IMR-90 (cell line): ENCODE measurements at regions of chr9 and their contacts with region 1.

Region 1: DNA sequence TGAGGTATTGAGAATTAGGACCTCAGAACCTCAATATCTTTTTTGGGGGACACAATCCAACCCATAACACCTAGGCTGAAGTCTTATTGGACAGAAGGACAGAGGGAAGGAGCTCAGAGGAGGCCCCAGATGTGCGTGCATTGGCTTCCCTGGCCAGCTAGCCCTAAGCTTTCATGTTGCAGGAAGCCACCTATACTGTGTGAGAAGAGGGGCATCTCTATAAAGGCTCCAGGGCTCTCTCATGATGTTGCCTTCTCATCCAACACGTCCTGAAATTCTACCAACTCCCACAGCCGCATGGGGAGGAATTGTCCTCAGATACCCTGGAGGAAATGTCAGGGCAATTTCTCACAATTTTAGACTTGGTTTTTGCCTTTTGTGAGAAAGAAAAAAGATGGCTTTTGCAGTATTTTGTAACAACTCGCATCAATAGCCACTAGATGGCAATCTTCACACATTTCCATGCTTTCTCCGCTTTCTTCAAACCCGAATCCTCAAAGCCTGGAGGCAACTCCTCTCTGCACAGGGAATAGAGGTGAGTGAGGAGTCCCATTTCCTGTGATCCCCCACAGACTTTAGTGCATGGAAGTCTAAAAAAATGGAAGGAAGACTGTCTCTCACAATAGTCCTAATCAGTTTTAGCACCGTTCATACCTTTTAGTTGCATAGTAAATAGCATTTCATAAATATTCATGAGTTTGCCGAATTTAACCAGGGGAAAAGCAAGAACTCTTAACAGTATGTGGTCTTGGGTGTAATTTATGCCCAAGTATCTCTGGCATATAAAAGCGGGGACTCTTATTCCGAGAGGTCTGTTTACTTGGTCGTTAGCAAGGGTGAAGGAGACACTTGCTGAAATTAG is 7.4 kb upstream of the PPP3R2 start:
- DNase-seq: peak; percentile 51
- ATAC-seq: peak; percentile 82
- H3K4me3 ChIP-seq: no peak overlapping the region
- H3K27ac ChIP-seq: no peak overlapping the region
- H3K4me1 ChIP-seq: no peaks in the 10 kb centered on the region
- H3K27me3 ChIP-seq: peaks cover 1% of the 10 kb centered on the region; the same call in 1 of the 2 replicates
- CTCF ChIP-seq: peak; percentile 67
- POLR2A ChIP-seq: no peak
- RAD21 ChIP-seq: peak; percentile 63

Region 2: DNA sequence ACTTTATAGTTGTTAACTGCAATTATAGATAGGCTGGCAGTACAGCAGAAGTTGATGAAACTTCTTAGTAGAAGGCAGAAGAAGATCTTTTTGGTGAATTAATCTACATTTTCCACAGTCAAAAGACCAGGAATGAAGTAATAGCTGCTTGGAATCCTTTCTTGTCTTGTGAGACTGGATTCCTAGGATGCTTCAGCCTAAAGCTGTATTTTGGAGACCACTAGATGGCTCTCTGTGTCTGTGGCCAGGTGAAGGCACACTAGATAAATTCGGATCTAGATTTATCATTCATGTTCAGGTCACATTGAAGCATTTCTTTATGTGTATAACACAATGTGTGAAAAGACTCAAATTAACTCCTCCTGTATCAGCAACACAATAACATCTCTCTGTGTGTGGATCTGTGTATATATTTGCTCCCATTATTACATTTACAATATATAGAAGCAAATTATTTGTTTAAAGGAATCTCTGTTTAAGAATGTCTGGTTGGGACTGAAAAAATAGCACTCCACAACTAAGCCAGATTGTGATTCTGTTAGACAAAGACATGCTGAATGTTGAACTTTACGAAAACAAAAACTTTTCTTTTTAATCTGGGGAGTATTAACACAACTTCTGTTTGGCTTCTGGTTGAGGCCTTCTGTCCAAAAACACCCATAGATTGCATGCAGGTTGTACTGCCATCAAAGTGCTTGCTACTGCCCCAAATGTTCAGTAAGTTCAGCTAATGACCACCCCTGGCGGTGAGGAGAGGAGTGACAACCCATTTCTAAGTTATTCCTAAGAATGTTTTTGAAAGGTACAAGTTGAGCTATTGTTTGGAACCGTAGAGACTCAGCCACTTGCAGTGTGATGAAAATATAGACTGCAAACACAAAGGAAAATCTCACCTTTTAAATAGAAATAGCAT is 125.7 kb after region 1 on chr9:
- CTCF ChIA-PET with region 1: no interaction called
- POLR2A ChIA-PET with region 1: no interaction called
- dilution Hi-C with region 1: no loop called
- in situ Hi-C with region 1: no loop called
- intact Hi-C with region 1: loop called (anchors 1 kb)
- DNase-seq: peak; percentile 11
- ATAC-seq: peak; percentile 59; the same call in 1 of the 2 replicates
- H3K4me3 ChIP-seq: no peak overlapping the region
- H3K27ac ChIP-seq: no peak overlapping the region
- H3K4me1 ChIP-seq: no peaks in the 10 kb centered on the region
- H3K27me3 ChIP-seq: no peaks in the 10 kb centered on the region
- CTCF ChIP-seq: peak; percentile 40
- POLR2A ChIP-seq: no peak
- RAD21 ChIP-seq: peak; percentile 29; the same call in 1 of the 2 replicates